HepG2 (cell line): ENCODE measurements at regions of chr2 and their contacts with region 1.

Region 1: DNA sequence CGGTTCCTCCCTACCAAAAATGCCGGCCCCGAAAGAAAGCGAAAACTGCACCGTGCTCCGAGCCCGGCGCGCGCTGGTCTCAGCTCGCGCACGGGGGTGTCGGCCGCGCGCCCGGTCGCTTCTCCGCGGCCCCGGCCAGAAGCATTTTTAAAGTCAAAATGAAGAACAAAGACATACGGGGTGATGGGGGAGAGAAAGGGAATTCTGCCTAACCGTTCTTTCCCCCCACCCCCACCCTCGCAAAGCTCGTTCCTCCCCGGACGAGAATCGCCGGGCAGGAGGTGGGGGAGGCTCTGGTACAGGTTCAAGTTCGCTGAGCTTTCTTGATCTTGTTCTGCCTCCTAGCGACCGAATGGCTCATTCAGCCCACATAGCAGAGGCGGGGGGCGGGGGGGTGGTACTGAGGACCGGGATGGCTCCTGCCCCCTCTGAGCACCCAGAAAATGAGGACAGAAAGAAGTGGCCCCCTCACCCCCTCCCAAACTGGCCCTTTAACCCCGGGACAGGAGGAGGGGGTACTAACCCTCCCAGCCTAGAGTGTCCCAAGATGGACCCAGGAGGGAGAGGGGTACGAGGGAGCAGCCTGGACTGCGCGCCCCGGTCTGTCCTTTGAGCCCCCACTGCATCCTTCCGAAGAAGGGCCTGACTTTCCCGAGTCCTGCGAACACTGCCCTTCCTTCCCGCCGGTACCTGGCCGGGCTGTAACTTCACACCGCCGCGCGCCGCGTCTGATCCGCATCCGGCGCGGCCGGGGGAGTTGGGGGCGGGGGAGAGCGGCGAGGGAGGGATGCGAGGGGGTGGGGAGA is 3.1 kb downstream of the BCL11A start:
- DNase-seq: peak; percentile 56
- ATAC-seq: peak; percentile 46
- H3K4me3 ChIP-seq: peak overlapping the region; percentile 44 to 67 (median 60)
- H3K27ac ChIP-seq: no peak overlapping the region
- H3K4me1 ChIP-seq: peaks cover 24% of the 10 kb centered on the region
- H3K27me3 ChIP-seq: peaks cover 22 to 81% of the 10 kb centered on the region in 2 experiments
- CTCF ChIP-seq: peak; percentile 79
- EP300 ChIP-seq: no peak
- POLR2A ChIP-seq: no peak
- RAD21 ChIP-seq: peak; percentile 81

Region 2: GRCh38 chr2:60439219-60439974 is 111.0 kb before region 1 on chr2:
- CTCF ChIA-PET with region 1: no interaction called
- POLR2A ChIA-PET with region 1: no interaction called
- in situ Hi-C with region 1: no loop called
- intact Hi-C with region 1: loop called (anchors 5 kb)
- DNase-seq: no peak
- ATAC-seq: peak; percentile 96
- H3K4me3 ChIP-seq: no peak overlapping the region
- H3K27ac ChIP-seq: no peak overlapping the region
- H3K4me1 ChIP-seq: no peaks in the 10 kb centered on the region
- H3K27me3 ChIP-seq: no peaks in the 10 kb centered on the region
- CTCF ChIP-seq: peak; percentile 37; the same call in 1 of the 2 replicates
- EP300 ChIP-seq: no peak
- POLR2A ChIP-seq: no peak
- RAD21 ChIP-seq: no peak

Region 3: DNA sequence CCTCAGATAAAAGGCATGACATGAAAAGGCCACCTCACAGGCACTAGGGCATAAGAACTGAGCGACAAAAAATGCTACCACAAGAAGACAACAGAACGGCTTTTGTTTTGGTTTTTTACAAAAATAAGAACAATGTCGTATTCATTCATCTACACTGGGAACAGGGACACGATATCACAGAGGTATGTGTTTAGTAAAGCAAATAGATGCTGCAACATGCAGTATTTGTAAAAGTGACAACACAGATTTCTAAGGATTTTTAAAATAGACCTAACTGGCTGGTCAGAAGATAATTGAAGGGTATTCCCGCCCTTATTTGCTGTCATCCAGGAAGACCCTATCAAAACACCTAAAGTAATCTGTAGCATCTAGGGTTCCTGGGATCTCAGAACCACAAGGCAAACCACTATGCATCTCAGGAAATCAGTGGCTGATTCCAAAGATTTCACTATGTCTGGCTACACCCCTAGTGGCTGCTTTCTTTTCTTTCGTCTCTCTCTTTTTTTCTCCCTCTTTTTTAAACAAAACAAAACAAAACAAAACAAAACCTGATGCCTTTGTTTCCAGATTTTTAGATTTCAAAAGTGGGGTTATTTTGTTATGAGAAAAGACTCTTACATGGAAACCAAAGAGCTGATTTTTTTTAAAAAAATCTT is 94.1 kb before region 1 on chr2:
- CTCF ChIA-PET with region 1: no interaction called
- POLR2A ChIA-PET with region 1: no interaction called
- in situ Hi-C with region 1: no loop called
- intact Hi-C with region 1: loop called (anchors 5 kb)
- DNase-seq: peak; percentile 30
- ATAC-seq: no peak
- H3K4me3 ChIP-seq: no peak overlapping the region
- H3K27ac ChIP-seq: no peak overlapping the region
- H3K4me1 ChIP-seq: no peaks in the 10 kb centered on the region
- H3K27me3 ChIP-seq: peaks cover 2 to 15% of the 10 kb centered on the region in 2 experiments; a peak in 2 of 5 replicates
- CTCF ChIP-seq: no peak
- EP300 ChIP-seq: no peak
- POLR2A ChIP-seq: no peak
- RAD21 ChIP-seq: no peak

Region 4: DNA sequence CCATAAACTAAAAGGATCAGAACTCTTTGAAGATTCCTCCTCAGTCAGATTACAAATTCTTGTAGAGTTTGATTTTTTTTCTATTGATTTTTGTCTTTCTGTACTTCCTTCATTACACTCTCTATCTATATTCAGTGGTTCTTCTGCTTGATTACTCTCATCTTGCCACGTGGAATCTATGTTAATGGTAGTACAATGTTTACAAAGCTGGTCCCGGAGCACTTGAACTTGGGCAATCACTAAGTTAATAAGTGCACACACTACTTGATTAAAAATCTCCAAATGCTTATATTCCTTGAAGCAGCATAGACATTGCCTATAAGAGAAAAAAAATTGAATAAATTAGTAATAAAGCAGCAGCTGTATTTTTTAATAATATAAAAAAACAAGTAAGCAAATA is 855.4 kb after region 1 on chr2:
- CTCF ChIA-PET with region 1: no interaction called
- POLR2A ChIA-PET with region 1: no interaction called
- in situ Hi-C with region 1: no loop called
- intact Hi-C with region 1: no loop called
- DNase-seq: no peak
- ATAC-seq: no peak
- H3K4me3 ChIP-seq: no peak overlapping the region
- H3K27ac ChIP-seq: no peak overlapping the region
- H3K4me1 ChIP-seq: peaks cover 2% of the 10 kb centered on the region
- H3K27me3 ChIP-seq: no peaks in the 10 kb centered on the region
- CTCF ChIP-seq: no peak
- EP300 ChIP-seq: no peak
- POLR2A ChIP-seq: no peak
- RAD21 ChIP-seq: no peak

Region 5: DNA sequence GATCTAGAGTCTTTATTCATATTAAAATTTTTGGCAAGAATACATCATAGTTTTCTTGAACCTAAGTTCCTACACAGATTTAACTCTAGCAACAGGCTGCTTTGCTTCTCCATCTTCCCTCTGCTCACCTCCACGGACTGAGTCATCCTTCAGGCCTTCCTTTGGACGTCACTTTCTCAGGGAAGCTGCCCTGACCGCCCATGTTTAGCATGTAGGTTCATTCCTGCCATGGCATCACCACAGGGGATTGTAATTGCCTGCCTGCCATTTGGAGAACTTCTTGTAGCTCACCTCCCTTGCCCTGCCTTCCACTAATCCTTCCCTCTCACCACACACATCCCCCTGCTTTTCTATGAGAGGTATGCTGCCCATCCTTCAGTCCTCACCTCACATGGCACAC is 1601.6 kb after region 1 on chr2:
- CTCF ChIA-PET with region 1: no interaction called
- POLR2A ChIA-PET with region 1: no interaction called
- in situ Hi-C with region 1: no loop called
- intact Hi-C with region 1: no loop called
- DNase-seq: no peak
- ATAC-seq: peak; percentile 60
- H3K4me3 ChIP-seq: no peak overlapping the region
- H3K27ac ChIP-seq: no peak overlapping the region
- H3K4me1 ChIP-seq: peaks cover 10% of the 10 kb centered on the region
- H3K27me3 ChIP-seq: no peaks in the 10 kb centered on the region
- CTCF ChIP-seq: no peak
- EP300 ChIP-seq: no peak
- POLR2A ChIP-seq: no peak
- RAD21 ChIP-seq: no peak